Transverse colon (tissue), 4 donors: ENCODE measurements at regions of chr6 and their contacts with region 1.

Region 1: GRCh38 chr6:69570106-69570505 is 226.7 kb downstream of the LMBRD1 start:
- DNase-seq: no peak
- H3K4me3 ChIP-seq: no peak overlapping the region
- H3K27ac ChIP-seq: no peak overlapping the region
- H3K4me1 ChIP-seq: no peaks in the 10 kb centered on the region
- H3K27me3 ChIP-seq: no peaks in the 10 kb centered on the region
- CTCF ChIP-seq: no peak
- EP300 ChIP-seq: no peak
- POLR2A ChIP-seq: no peak

Region 2: DNA sequence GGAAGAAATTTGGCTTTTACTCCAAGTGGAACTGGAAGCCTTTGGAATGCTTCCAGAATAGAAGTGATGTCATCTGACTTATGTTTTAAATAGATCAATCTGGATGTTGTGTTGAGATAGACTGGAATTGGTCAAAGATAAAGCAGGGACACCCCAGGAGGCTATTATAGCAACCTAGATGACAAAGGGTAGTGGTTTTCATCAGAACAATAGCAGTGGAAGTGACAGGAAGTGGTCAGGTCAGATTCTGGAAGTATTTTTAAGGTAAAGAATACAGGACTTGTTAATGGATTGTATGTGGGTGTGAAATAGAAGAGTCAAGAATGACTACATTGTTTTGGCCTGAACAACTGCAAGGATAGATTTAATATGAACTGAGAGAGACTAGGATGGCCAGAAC is 743.6 kb before region 1 on chr6:
- in situ Hi-C with region 1: no loop called
- intact Hi-C with region 1: loop called (anchors 5 kb)
- DNase-seq: no peak
- H3K4me3 ChIP-seq: no peak overlapping the region
- H3K27ac ChIP-seq: no peak overlapping the region
- H3K4me1 ChIP-seq: no peaks in the 10 kb centered on the region
- H3K27me3 ChIP-seq: no peaks in the 10 kb centered on the region
- CTCF ChIP-seq: no peak
- EP300 ChIP-seq: no peak
- POLR2A ChIP-seq: no peak

Region 3: GRCh38 chr6:69848552-69848951 is 278.4 kb after region 1 on chr6:
- in situ Hi-C with region 1: no loop called
- intact Hi-C with region 1: no loop called
- DNase-seq: no peak
- H3K4me3 ChIP-seq: no peak overlapping the region
- H3K27ac ChIP-seq: no peak overlapping the region
- H3K4me1 ChIP-seq: peaks cover 0 to 4% (median 0%) of the 10 kb centered on the region in 4 donors
- H3K27me3 ChIP-seq: peaks cover 8% of the 10 kb centered on the region
- CTCF ChIP-seq: no peak
- EP300 ChIP-seq: no peak
- POLR2A ChIP-seq: no peak